Right ventricle myocardium inferior (tissue), 1 donor: ENCODE measurements at regions of chrX and their contacts with region 1.

Region 1: GRCh38 chrX:72276478-72276953 is 532 bp downstream of the RPS4X start:
- DNase-seq: no peak
- ATAC-seq: no peak

Region 2: DNA sequence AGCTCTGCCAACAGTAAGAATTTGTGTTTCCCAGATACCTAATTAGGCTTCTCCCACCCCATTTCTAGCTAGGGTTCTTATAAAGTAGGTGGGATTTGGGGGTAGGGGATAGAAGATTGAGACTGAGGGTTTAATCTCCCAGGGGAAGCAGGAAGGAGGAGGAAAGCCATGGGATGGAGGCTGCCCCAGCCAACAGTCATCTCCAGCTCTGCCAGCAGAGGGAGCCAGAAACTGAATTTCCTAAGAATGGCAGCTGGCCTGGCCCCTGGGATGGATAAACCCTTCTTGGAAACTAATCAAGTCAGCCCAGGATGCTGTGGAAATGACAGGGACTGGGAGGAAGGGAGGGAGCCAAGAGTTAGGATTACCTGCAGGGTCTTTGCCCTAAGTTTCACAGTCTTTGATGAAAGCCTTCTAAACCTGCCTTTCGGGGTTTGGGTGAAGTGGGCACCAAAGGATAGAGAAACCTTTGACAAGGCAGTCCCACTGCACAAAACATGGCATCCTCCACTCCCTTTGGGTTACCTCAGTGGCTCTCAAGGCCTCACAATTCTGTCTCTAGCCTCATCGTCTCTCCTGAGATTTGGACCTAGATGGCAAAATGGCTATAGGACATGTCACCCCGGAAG is 30.9 kb before region 1 on chrX:
- intact Hi-C with region 1: loop called (anchors 5 kb)
- DNase-seq: no peak
- ATAC-seq: peak; percentile 57